ENCODE measurements at regions of chr19 and their contacts with region 1.

Region 1: DNA sequence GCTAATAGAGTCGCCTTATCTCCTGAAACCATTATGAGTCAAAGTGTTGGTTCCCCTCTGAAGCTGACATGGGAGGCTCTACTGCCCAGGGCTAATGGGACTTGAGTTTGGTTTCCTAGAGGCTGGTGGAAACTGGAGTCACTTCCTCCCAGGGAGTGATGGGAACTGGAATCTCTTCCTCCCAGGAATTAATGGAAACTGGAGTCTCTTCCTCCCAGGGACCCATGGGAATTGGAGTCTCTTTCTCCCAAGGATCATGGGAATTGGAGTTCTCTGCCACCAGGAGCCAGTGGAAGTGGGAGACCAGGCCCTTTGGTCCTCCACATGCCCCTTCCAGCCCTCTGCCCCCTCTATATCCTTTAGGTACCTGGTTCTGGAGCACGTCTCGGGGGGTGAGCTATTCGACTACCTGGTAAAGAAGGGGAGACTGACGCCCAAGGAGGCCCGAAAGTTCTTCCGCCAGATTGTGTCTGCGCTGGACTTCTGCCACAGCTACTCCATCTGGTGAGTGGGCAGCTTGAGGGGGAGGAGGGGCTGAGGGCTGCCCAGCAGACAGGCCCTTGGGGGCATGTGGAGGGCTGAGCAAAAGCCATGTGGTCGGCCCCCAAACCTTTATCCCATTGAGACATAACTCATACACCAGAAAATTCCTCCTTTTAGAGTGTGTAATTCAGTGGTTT is 5.5 kb downstream of the BRSK1 start:
- DNase-seq: no peak
- CTCF ChIP-seq: no peak

Region 2: DNA sequence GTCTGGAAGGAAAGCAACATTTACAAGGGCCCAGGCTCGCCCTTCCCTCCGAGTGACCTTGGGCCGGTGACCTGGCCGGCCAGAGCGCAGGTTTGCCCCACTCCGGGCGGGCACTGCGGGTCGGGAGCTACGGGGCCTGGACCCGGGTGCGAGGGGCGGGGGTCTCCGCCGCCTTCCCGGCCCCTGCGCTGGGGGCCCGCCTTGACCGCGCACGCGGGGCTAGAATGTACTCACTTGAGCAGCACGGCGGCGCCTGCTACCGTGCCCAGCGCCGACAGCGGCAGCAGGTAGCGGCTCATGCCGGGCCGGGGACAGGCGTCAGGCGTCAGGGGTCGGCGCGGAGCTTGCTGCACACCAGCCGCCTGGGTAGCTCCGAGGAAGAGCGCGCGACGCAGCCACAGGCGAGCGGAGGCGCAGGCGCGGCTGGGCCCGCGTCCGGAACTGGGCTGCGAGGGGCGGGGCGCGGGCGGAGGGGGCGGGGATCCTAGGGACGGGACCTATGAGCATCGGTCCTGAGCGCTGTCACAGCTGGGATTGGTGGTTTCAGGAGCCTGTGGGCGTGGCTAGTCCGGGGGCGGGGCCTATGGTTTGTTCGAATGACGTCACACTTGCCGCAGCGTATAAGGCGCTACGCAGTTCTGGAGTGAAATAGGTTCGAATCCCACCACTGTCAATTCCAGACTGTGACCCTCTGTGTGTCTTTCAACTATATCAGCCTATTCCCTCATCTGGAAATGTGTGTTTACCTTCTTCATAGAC is 226.3 kb before region 1 on chr19 and contains the start of gene RDH13:
- CTCF ChIA-PET with region 1: no interaction called
- POLR2A ChIA-PET with region 1: no interaction called
- DNase-seq: peak; percentile 99
- CTCF ChIP-seq: no peak

Region 3: GRCh38 chr19:55275851-55276719 is 13.2 kb before region 1 on chr19:
- CTCF ChIA-PET with region 1: interaction called, 13 read pairs
- POLR2A ChIA-PET with region 1: interaction called, 3 read pairs
- DNase-seq: peak; percentile 70
- CTCF ChIP-seq: no peak

Region 4: GRCh38 chr19:55385740-55386529 is 96.7 kb after region 1 on chr19 and contains the start of gene RPL28:
- CTCF ChIA-PET with region 1: interaction called, 15 read pairs
- POLR2A ChIA-PET with region 1: no interaction called
- DNase-seq: peak; percentile 98
- CTCF ChIP-seq: no peak

Region 5: DNA sequence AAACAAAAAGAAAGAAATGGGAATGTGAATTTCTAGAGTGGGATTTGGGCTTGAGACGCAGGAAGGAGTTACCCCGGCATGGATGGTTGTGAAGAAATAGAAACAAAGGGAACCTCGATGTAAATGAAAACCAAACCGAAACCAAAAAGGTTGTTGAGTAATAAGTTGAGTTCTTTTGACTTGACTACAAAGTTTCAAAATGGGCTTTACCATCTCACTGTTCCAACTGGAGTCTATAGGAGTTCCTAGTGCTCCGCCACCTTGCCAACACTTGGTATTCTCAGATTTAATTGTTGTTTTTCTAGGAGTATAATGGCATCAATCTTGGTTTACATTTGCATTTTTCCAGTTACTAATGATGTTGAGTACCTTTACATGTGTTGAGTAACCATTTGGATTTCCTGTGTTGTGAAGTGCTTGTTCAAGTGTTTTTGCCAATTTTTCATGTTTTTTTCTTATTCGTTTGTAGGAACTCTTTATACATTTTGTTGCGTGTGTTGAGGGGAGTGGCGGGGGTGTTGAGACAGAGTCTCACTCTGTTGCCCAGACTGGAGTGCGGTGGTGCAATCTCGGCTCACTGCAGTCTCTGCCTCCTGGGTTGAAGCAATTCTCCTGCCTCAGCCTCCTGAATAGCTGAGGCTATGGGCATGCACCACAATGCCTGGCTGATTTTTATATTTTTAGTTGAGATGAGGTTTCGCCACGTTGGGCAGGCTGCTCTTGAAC is 109.1 kb after region 1 on chr19:
- CTCF ChIA-PET with region 1: no interaction called
- POLR2A ChIA-PET with region 1: no interaction called
- DNase-seq: peak; percentile 59
- CTCF ChIP-seq: no peak